Right cardiac atrium (tissue), 5 donors: ENCODE measurements at regions of chr16 and their contacts with region 1.

Region 1: DNA sequence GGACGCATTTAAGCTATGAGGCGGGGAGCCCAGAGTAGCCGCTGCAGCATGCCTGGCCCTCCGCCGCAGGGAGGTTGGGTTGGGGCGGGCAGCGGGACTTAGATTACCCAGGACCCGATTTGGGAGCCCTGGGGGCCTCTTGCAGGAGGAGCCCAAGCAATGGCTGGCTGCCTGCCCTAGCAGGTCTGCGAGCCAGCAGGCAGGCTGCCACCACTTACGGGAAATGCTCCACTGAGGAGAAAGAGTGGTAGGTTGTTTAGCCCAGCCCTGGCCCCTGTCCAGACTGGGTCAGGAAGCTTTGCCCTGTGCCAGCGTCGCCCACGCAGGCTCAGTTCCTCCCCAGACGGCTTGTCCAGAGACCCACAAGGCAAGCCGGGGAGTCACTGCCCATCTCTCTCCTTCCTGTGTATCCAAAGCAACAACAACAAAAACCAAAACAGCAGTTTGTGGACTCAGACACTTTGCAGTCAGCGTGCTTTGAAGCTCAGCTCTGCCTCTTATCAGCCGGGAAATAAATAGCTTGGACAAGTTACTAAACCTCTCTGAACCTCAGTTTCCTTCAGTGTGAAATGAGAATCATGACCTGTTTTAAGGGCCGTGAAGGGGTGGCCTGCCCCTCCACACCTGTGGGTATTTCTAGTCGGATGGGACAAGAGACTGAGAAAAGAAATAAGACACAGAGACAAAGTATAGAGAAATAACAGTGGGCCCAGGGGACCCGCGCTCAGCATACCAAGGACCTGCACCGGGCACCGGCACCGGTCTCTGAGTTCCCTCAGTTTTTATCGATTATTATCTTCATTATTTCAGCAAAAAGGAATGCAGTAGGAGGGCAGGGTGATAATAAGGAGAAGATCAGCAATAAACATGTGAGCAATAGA is 10.5 kb upstream of the TVP23A start:
- DNase-seq: peak; percentile 97 to 99 (median 98)
- ATAC-seq: peak; percentile 89 to 91
- H3K4me3 ChIP-seq: no peak overlapping the region
- H3K27ac ChIP-seq: peak overlapping the region; percentile 77
- H3K4me1 ChIP-seq: peaks cover 8% of the 10 kb centered on the region
- H3K27me3 ChIP-seq: no peaks in the 10 kb centered on the region

Region 2: DNA sequence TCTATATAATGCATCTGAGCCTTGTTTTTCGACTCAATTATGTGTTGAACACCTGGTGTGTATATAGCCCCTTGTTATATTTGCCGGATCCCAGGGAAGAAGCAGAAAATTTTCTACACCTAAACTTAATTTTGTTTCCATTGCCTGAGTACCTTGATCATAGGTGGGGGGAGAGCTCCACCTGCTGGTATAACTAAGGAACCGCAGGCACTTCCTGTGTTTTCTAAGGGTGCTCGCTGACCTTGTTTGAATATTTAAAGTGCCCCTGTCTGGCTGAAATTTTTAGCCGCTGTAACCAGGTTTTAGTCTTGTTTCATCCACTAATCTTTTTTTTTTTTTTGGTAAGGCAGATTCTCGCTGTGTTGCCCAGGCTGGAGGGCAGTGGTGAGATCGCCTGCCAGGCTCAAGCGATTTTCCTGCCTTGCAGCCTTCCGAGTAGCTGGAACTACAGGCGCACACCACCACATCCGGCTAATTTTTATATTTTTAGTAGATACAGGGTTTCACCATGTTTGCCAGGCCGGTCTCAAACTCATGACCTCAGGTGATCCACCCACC is 91.9 kb before region 1 on chr16:
- intact Hi-C with region 1: no loop called
- DNase-seq: peak in 2 of 3 donors; percentile 31 to 73
- ATAC-seq: peak; percentile 50 to 62
- H3K4me3 ChIP-seq: no peak overlapping the region
- H3K27ac ChIP-seq: peak overlapping the region; percentile 83
- H3K4me1 ChIP-seq: peaks cover 2% of the 10 kb centered on the region
- H3K27me3 ChIP-seq: no peaks in the 10 kb centered on the region

Region 3: DNA sequence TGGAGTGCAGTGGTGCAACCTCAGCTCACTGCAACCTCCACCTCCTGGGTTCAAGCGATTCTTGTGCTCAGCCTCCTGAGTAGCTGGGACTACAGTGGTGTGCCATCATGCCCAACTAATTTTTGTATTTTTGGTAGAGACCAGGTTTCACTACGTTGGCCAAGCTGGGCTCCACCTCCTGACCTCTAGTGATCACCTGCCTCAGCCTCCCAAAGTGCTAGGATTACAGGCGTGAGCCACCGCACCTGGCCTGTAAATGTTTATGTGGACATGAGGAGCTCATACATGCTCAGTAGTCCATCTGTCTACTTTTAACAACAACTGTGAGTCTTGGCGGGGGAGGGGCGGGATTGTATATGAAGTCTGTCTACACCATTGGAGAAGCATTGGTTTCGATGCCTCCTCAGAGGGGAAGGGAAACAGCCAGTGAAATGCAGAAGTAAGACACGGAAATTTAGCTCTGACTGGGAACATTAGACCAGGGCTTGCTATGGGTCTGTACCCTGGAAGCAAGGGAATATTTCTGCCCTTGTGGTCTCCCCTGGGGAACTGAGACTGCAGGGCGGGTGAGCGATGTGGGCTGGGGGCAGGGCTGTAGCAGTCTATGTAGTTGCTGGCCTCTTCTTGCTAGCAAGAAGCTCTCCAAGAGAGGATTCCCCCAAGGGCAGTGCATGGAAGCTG is 76.1 kb before region 1 on chr16:
- intact Hi-C with region 1: loop called in 2 of 4 experiments (anchors 5 to 10 kb)
- DNase-seq: peak in 2 of 3 donors; percentile 81 to 89
- ATAC-seq: peak; percentile 40 to 53
- H3K4me3 ChIP-seq: no peak overlapping the region
- H3K27ac ChIP-seq: no peak overlapping the region
- H3K4me1 ChIP-seq: no peaks in the 10 kb centered on the region
- H3K27me3 ChIP-seq: no peaks in the 10 kb centered on the region

Region 4: DNA sequence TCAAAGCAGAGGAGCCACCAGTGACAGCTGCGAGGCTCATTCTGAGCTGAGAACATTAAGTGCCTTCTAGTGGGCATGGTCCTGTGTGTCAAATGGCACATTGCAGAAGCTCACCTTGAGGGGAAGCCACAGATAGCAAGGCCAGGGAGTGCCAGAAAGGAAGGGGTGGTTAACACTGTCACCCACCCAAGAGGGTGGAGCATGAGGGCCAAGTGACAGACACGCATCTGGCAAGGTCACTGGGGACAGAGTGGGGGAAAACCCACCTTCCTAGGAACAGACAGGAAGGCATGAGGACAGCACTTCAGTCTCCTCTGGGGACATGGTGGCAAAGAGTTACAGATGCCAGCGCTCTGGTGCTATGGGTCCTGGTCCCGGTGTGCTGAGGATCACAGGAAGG is 63.3 kb before region 1 on chr16:
- intact Hi-C with region 1: loop called in 1 of 4 experiments (anchors 10 kb)
- DNase-seq: no peak
- ATAC-seq: peak in 1 of 2 donors; percentile 13
- H3K4me3 ChIP-seq: no peak overlapping the region
- H3K27ac ChIP-seq: no peak overlapping the region
- H3K4me1 ChIP-seq: peaks cover 8% of the 10 kb centered on the region
- H3K27me3 ChIP-seq: no peaks in the 10 kb centered on the region

Region 5: DNA sequence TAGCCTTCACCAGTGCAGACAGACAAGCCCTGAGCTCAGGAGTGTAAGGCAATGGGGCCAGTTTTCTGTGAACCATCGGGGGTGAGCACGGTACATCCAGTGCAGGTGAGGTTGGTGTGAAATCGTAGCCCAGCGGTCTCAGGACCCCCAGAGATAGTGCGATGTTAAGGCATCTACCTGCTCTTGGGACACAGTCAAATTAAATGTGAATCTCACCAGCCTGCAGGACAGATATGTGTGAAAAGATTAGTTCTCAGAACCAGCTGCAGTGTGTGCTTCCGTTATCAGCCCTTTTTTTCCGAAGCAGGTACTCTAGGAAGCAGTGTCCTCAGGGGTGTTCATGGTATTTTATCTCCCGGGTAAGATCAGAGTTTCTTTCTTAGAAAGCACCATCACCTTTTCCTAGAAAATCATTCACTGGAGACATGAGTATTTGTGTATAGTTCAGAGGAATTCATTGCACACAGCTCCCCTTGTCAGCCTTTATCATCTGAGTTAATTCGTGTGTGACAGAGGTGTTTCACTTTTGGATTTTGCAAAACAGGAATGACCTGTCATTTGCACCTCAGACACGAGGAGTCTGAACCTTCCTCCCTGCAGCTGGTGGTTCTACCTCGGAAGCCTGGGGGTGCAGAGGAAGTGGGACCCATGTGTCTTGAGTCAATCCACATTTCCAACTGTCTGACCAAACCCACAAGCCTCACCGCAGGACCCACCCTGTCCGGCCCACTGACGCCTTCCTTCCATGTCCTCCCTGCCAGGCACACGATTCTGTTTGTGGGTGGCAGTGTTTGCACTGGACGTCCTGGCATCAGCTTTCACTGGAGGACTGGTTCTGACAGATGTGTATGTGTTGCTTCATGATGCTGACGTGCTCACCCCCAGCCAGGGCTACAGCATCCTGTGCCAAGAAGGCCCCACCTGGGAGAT is 223.1 kb after region 1 on chr16:
- intact Hi-C with region 1: no loop called
- DNase-seq: no peak
- ATAC-seq: no peak
- H3K4me3 ChIP-seq: no peak overlapping the region
- H3K27ac ChIP-seq: no peak overlapping the region
- H3K4me1 ChIP-seq: peaks cover 2% of the 10 kb centered on the region
- H3K27me3 ChIP-seq: no peaks in the 10 kb centered on the region